Dendritic cell treated with granulocyte-macrophage colony-stimulating factor and Interleukin-4, amounts not matched to agents 40 ng/mL and 50 ng/mL, for 4 days (primary cell): ENCODE measurements at regions of chr17 and their contacts with region 1.

Region 1: GRCh38 chr17:49997791-49998703 is 3.0 kb upstream of the DLX3 start:
- H3K4me3 Mint-ChIP-seq: no peak overlapping the region
- H3K27ac Mint-ChIP-seq: no peak overlapping the region
- H3K4me1 Mint-ChIP-seq: peaks cover 28% of the 10 kb centered on the region
- H3K27me3 Mint-ChIP-seq: peaks cover 77% of the 10 kb centered on the region

Region 2: DNA sequence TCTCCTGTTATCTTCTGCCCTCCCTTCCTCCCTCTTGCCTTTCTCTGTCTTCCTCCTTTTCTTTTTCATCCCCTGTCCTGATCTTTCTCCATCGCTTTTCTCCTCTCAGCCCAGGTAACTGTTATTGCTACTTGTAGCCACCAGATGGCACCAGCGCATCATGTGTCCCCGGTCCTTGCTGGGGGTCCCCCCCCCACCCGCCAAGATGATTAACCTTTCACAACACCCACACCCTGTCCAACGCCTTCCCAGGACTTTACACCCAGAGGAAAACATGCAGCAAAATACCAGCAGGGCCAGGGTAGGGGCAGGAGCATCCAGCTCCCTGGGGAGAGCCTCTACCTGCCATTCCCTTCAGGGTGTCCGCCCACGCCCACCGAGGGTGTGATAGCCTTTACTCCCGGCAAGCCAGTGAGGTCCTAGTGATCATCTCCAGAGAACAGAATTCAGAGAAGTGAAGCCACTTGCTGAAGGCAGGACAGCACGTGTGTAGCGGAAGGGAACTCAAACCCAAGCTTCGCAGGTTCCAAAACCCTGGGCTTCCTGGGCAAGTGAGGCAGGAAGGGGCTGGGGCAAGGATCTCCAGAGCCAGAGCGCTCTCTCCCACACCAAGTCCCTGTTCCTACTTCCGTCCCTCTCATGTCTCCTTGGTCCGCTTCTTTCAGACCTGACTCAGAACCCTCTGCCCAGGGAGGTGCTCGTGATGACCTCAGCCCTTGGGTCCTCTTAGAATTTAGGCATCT is 136.7 kb before region 1 on chr17:
- intact Hi-C with region 1: loop called (anchors 1 kb)
- H3K4me3 Mint-ChIP-seq: no peak overlapping the region
- H3K27ac Mint-ChIP-seq: no peak overlapping the region
- H3K4me1 Mint-ChIP-seq: peaks cover 26% of the 10 kb centered on the region
- H3K27me3 Mint-ChIP-seq: peaks cover 32% of the 10 kb centered on the region

Region 3: DNA sequence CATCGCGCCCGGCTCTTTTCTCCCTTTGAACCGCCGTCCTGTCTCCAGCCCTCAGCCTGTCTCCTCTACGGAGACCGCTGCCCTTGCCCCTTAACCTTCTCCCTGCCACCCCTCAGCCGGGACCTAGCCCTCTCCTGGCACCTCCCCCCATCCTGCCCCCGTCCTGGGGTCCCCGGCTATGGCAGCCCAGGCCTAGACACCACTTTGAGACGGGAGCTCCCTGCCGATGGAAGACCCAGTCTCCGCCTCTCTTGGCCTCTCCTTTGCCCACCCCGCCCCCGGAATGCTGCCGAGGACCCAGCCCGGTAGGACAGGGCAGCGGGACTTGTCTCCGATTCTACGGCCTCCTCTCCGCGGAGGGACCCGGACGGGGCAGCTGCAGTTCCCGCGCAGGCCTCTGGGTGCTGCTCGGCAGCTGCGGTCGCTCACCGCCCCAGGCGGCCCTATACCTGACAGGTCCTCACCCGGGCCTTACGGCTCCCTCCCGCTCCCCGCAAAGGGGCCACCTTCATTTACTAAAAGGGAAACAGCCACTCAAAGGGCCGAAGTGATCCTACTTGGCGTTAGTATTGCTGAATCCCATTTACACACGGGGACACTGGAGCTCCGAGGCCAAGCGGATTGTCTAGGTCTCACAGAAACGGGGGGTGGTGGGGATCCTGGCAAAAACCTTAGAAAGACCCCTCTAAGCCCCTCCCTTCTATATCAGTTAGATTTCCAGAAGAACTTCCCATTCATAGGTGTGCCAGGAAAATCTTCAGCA is 117.6 kb before region 1 on chr17:
- intact Hi-C with region 1: loop called (anchors 1 kb)
- H3K4me3 Mint-ChIP-seq: no peak overlapping the region
- H3K27ac Mint-ChIP-seq: no peak overlapping the region
- H3K4me1 Mint-ChIP-seq: peaks cover 8% of the 10 kb centered on the region
- H3K27me3 Mint-ChIP-seq: peaks cover 75% of the 10 kb centered on the region

Region 4: DNA sequence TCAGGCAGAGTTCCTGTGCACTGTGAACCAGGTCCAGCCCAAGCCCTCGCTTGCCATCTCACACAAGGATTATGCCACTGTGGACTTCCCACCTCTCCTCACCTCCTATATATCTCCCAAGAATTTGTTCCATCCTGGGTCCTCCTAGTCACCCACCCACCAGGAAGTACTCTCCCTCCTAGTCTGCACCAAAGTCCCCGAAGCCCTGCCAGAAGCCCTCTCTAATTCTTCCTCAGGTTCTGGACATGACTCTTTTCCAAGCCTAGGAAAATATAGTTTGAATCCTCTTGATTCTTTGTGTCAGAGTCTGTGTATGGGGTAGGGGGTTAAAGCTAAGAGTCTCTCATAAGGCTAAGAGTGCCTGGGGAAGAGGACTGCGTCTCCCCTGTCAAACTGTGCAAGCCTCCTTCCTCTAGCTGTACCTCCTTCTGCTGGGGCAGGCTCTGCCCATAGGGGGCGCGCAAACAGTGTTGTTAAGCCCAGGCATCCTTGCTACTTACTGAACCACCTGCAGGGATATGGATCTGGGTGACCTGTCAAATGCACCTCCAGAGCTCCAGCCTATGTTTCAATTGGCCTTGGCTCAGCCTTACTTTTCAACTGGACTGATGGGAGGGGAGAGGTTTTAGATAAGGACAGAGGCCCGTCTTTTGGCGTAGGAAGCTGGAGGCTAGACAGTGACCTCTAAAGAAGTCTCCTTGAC is 45.7 kb before region 1 on chr17:
- intact Hi-C with region 1: loop called (anchors 1 kb)
- H3K4me3 Mint-ChIP-seq: no peak overlapping the region
- H3K27ac Mint-ChIP-seq: no peak overlapping the region
- H3K4me1 Mint-ChIP-seq: peaks cover 12% of the 10 kb centered on the region
- H3K27me3 Mint-ChIP-seq: peaks cover 81% of the 10 kb centered on the region

Region 5: DNA sequence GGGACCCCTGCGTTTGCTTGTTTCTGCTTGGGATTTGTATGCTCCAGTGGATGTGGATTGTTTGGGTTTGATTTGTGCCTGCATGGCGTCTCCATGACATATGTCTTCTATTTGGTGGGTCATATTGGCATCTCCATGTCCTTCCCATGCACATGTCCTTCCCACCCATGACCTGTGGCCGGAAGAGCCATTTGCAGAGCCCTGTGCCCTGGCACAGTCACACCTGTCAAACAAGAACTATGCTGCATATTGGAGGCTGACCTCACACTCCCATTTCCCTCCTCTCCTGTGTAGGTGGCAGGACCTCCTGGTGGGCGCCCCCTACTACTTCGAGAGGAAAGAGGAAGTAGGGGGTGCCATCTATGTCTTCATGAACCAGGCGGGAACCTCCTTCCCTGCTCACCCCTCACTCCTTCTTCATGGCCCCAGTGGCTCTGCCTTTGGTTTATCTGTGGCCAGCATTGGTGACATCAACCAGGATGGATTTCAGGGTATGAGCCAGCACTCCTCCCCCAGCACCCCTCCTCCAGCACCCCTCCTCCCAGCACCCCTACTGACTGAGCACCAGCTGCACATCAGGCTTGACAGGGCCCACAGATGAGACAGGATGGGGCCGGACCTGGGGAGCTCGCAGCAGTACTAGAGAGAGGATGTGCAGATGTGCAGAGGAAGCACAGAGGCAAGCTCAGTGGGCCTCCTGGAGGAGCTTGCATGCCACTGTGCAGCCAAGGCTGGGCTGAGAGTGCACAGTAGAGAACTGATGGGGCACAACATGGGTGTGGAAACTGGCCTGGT is 73.8 kb after region 1 on chr17:
- intact Hi-C with region 1: no loop called
- H3K4me3 Mint-ChIP-seq: no peak overlapping the region
- H3K27ac Mint-ChIP-seq: no peak overlapping the region
- H3K4me1 Mint-ChIP-seq: no peaks in the 10 kb centered on the region
- H3K27me3 Mint-ChIP-seq: peaks cover 11% of the 10 kb centered on the region